ENCODE measurements at regions of chr1 and their contacts with region 1.

Region 1: DNA sequence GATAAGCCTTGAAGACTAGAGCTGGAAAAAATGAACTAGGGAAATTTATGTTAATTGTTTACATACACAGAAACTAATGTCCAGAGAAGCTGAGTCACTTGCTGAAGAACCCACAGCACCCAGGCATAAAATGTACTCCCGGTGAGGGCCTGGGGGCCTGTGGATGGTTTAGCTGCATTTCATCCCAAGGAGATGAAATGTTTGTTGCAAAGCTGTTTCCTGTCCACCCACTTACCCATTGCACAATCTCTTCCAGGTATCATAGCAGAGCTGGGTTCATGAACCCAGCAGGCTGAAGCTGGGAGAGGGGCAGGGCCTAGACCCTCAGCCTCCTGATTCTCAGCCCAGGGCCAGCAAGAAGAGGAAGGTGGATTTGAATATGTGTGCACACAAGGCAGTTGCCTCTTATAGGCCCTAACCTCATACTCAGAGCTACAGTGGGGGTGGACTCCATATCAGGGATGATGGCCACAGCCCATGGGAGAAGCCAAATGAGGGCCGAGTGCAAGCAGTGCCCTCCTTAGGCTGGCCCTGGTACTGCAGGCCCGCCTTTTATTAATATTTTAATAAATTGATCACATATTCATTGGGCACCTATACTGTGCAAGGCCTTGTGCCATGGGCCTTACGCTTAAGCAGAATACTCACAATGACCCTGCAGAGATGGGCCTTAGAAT is 110.8 kb downstream of the LACTBL1 start:
- DNase-seq: peak; percentile 62
- H3K4me3 ChIP-seq: no peak overlapping the region
- H3K27ac ChIP-seq: no peak overlapping the region
- H3K4me1 ChIP-seq: peaks cover 3% of the 10 kb centered on the region
- H3K27me3 ChIP-seq: no peaks in the 10 kb centered on the region
- CTCF ChIP-seq: peak; percentile 88 to 91
- POLR2A ChIP-seq: no peak

Region 2: GRCh38 chr1:22673486-22674409 is 188.2 kb before region 1 on chr1:
- CTCF ChIA-PET with region 1: interaction called, 58 read pairs
- POLR2A ChIA-PET with region 1: no interaction called
- dilution Hi-C with region 1: no loop called
- intact Hi-C with region 1: loop called (anchors 1 kb)
- DNase-seq: peak; percentile 74
- H3K4me3 ChIP-seq: no peak overlapping the region
- H3K27ac ChIP-seq: no peak overlapping the region
- H3K4me1 ChIP-seq: peaks cover 10% of the 10 kb centered on the region
- H3K27me3 ChIP-seq: peaks cover 11 to 12% of the 10 kb centered on the region in 2 experiments
- CTCF ChIP-seq: peak; percentile 67 to 86
- POLR2A ChIP-seq: no peak

Region 3: DNA sequence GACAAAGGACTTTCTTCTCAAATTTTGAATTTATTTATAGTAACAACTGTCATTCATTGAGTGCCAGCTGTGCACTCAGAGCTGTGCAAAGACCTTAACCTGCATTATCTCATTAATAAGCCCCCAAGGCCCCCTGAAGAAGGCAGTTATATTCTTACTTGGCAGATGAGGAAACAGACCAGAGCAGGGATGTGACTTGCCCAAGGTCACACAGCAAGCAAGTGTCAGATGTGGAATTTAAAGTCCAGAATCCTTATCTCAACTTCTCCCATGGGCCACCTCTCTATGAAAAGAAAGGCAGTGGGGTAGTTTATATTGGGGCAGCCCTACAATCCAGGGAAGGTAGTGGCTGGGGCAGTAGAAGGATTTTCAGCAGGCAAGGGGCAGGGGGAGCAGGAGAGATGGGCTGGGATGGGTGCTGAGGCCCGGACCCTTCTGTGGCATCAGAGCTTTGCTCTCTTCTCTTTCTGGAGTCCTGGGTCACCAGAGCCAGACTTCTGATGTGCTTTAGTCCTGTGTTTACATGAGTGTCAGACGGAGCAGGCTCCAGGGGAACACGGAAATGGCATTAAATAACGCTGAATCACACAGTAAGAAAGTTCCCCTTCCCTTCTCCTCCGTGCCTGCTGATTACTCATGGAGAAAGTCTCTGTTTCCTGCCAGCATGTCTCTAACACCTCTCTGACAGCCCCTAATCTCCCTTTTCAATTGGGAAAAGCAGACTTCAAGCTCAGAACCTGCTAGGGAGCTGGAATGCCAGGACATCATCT is 111.8 kb before region 1 on chr1:
- CTCF ChIA-PET with region 1: interaction called, 10 read pairs
- POLR2A ChIA-PET with region 1: no interaction called
- dilution Hi-C with region 1: no loop called
- intact Hi-C with region 1: loop called (anchors 2 kb)
- DNase-seq: peak; percentile 95
- H3K4me3 ChIP-seq: no peak overlapping the region
- H3K27ac ChIP-seq: peak overlapping the region; percentile 90
- H3K4me1 ChIP-seq: peaks cover 78% of the 10 kb centered on the region
- H3K27me3 ChIP-seq: no peaks in the 10 kb centered on the region
- CTCF ChIP-seq: no peak
- POLR2A ChIP-seq: peak; percentile 68

Region 4: DNA sequence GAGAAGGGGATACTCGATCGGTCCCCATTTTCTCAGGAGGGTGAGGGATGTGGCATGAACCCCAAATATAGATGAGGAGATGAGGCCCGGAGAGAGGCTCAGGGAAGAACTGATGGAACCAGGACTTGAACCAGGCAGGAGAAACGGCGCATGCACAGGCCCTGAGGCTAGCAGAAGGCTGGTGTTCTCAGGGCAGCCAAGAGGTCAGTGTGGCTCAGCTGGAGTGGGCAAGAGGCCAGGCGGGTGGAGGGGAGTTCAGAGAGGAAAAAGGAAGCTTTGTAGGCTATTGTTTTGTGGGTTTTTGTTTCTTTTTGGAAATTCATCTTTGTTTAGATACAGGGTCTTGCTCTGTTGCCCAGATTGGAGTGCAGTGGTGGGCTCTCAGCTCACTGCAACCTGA is 11.2 kb before region 1 on chr1:
- CTCF ChIA-PET with region 1: interaction called, 37 read pairs
- POLR2A ChIA-PET with region 1: no interaction called
- dilution Hi-C with region 1: no loop called
- intact Hi-C with region 1: no loop called
- DNase-seq: peak; percentile 83
- H3K4me3 ChIP-seq: no peak overlapping the region
- H3K27ac ChIP-seq: no peak overlapping the region
- H3K4me1 ChIP-seq: peaks cover 9% of the 10 kb centered on the region
- H3K27me3 ChIP-seq: no peaks in the 10 kb centered on the region
- CTCF ChIP-seq: no peak
- POLR2A ChIP-seq: no peak

Region 5: DNA sequence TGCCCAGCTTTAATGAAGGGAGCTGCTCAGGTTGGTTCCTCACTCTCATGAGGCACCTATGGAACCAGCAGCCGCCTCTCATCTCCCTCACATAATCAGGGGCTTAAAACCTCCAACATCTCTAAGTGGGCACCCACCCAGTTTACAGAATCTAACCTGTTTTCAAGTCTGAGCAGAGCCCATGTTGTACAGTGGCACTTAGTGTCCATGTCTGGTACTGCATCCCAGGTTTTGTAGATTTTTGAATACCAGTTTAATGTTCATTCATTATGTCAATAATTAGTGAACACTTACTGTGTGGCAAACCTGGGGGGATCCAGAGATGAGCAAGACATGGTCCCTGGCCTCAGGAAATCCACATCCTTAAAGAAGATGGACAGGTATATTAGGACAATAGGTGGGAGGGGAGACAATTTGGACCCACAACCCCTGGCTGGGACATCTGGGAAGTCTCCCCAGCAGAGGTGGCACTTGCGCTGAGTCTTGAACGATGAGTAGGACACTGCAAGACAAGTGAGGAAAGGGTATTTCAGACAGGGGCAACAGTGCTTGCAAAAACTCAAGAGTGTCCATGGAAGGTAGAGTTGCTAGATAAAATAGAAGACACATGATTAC is 27.4 kb after region 1 on chr1:
- CTCF ChIA-PET with region 1: interaction called, 22 read pairs
- POLR2A ChIA-PET with region 1: no interaction called
- dilution Hi-C with region 1: no loop called
- intact Hi-C with region 1: no loop called
- DNase-seq: peak; percentile 81
- H3K4me3 ChIP-seq: no peak overlapping the region
- H3K27ac ChIP-seq: peak overlapping the region; percentile 79
- H3K4me1 ChIP-seq: peaks cover 18% of the 10 kb centered on the region
- H3K27me3 ChIP-seq: no peaks in the 10 kb centered on the region
- CTCF ChIP-seq: peak; percentile 71 to 90
- POLR2A ChIP-seq: peak; percentile 5